ENCODE measurements at regions of chr3 and their contacts with region 1.

Region 1: GRCh38 chr3:10322352-10322710 is 1.4 kb upstream of the SEC13 start:
- DNase-seq: peak; percentile 63
- ATAC-seq: no peak
- H3K4me3 ChIP-seq: no peak overlapping the region
- H3K27ac ChIP-seq: no peak overlapping the region
- H3K4me1 ChIP-seq: no peaks in the 10 kb centered on the region; the same call in 1 of the 2 replicates
- H3K27me3 ChIP-seq: peaks cover 30% of the 10 kb centered on the region
- CTCF ChIP-seq: peak; percentile 63

Region 2: DNA sequence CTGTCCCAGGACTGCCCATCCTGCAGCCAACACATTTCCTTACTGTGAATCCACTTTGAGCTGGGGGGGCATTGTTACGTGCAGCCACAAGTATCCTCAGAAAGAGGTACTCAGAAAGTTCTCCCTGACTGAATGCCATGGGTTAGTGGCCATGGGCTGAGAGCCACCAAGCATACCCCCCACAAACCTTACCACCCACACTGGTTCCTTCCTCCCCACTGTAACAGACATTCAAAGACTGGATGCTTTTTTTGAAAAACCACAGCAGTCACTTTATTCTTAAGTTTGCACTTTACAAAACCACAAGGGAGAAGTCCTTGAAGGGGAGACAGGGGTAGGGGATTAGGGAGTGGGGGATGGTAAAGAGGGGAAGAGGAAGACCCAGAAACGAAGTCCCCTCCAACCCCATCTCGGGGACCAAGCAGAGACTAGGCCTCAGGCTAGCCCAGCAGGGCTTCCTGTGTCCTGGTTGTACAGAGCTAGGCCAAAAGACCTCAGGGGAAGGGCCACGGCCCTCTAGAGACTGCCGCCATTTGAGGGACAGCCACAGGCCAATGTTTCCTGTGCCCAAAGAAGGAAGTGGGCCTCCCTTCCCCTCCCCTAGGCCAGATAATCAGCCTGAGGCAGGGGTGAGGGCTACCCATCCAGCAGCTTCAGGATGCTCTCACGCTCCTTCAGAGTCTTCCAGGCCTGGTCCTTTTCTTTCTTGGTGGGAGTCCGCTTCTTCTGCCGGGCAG is 542.4 kb before region 1 on chr3:
- CTCF ChIA-PET with region 1: no interaction called
- POLR2A ChIA-PET with region 1: interaction called, 14 read pairs
- intact Hi-C with region 1: no loop called
- DNase-seq: no peak
- ATAC-seq: no peak
- H3K4me3 ChIP-seq: no peak overlapping the region
- H3K27ac ChIP-seq: no peak overlapping the region
- H3K4me1 ChIP-seq: no peaks in the 10 kb centered on the region
- H3K27me3 ChIP-seq: no peaks in the 10 kb centered on the region
- CTCF ChIP-seq: no peak

Region 3: DNA sequence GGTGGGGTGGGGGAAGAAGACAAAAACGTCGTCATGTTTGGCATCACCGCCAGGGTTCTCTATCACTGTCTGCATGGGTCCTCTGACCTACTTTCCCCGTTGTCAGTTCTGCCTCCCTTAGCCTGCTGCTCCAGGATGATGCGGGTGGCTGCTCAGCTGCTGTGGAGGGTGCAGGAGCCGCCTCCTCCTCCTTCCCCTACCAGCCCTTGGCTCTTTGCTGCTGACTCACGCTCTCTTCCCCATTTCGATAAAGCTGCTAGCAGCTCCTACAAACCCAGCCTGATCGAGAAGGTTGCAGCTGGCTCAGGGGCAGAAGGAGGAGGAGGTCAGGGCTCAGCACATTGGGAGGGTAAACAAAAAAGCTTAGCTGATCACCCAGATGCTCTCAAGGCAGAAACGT is 48.1 kb after region 1 on chr3:
- CTCF ChIA-PET with region 1: no interaction called
- POLR2A ChIA-PET with region 1: no interaction called
- intact Hi-C with region 1: no loop called
- DNase-seq: no peak
- ATAC-seq: no peak
- H3K4me3 ChIP-seq: no peak overlapping the region
- H3K27ac ChIP-seq: no peak overlapping the region
- H3K4me1 ChIP-seq: peaks cover 18% of the 10 kb centered on the region
- H3K27me3 ChIP-seq: no peaks in the 10 kb centered on the region
- CTCF ChIP-seq: no peak

Measured in PC-3 (cell line).